H1 (cell line): ENCODE measurements at regions of chr13 and their contacts with region 1.

Region 1: DNA sequence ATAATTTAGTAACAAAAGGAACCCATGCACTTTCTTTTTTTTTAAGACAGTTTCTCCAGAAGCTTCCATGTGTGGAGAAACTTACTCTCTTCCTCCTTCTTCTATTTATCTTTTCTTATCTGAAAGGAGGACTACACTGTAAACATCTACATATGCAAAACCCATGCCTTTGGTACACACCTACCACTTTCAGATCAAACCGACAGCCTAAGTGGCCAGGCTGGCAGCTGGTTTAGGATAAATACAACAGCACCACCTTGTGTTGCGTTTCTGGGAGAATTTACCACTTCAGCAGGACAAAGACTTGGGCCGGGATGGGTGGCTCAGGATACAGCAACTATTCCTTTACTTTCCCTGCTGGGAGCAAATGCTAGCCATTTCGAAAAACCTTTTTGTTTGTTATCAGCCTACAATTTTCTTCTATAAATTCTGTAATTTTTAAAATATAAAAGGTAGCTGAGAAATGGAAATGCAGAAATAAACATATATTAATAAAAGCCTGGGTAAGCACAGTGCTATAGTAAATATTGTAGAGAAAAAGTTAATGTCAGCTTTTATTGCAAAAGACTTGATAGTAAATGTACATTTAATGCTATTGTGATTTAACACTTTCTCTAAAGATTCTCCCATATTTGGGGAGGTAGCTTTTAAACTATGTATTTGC is 94.0 kb upstream of the RFC3 start:
- DNase-seq: peak; percentile 39 to 63
- H3K4me3 ChIP-seq: no peak overlapping the region
- H3K27ac ChIP-seq: no peak overlapping the region
- H3K4me1 ChIP-seq: no peaks in the 10 kb centered on the region
- H3K27me3 ChIP-seq: no peaks in the 10 kb centered on the region
- CTCF ChIP-seq: peak; percentile 43 to 83 (median 81)
- EP300 ChIP-seq: no peak
- POLR2A ChIP-seq: no peak
- RAD21 ChIP-seq: peak; percentile 97

Region 2: DNA sequence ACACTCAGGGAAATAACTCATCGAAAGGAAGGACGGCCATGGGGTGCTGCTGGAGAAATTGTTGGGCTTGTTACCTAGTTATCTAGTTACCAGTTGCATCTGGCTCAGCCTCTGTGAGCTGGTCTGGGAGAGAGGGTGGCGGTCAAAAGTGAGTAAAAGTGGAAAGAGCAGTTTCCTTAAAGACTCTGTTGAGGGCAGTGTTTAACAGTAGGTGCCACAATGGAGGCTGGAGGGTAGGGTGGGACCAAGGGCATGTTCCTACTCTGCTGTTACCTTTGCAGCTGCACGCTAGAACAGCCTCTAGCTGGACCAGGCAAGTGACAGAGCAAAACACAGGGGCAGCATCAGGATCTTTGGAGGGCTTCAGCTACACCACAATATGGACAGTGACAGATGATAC is 209.5 kb before region 1 on chr13:
- CTCF ChIA-PET with region 1: interaction called, 18 read pairs
- POLR2A ChIA-PET with region 1: no interaction called
- DNase-seq: no peak
- H3K4me3 ChIP-seq: no peak overlapping the region
- H3K27ac ChIP-seq: no peak overlapping the region
- H3K4me1 ChIP-seq: peaks cover 1 to 12% (median 6%) of the 10 kb centered on the region in 4 experiments; a peak in 4 of 7 replicates
- H3K27me3 ChIP-seq: no peaks in the 10 kb centered on the region
- CTCF ChIP-seq: peak in 2 of 3 experiments; percentile 50 to 53; a peak in 3 of 4 replicates
- EP300 ChIP-seq: no peak
- POLR2A ChIP-seq: no peak
- RAD21 ChIP-seq: peak; percentile 72 to 77

Region 3: DNA sequence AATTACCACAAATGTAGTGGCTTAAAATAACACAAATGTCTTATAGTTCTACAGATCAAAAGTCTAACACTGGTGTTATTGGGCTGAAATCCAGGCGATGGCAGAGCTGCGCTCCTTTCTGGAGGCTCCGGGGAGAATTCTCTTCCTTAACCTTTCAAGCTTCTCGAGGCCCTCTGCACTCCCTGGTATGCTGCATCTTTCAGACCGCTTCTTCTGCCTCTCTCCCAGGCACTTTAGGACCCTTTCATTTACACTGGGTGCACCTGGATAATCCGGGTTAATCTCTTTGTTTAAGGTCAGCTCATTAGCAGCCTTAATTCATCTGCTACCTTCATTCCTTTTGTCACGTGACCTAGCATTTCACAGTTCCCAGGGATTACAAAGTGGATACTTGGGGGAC is 117.2 kb before region 1 on chr13:
- CTCF ChIA-PET with region 1: interaction called, 17 read pairs
- POLR2A ChIA-PET with region 1: no interaction called
- DNase-seq: peak in 1 of 2 experiments; percentile 23
- H3K4me3 ChIP-seq: no peak overlapping the region
- H3K27ac ChIP-seq: no peak overlapping the region
- H3K4me1 ChIP-seq: peaks cover 0 to 4% (median under 1%) of the 10 kb centered on the region in 4 experiments; a peak in 1 of 7 replicates
- H3K27me3 ChIP-seq: no peaks in the 10 kb centered on the region
- CTCF ChIP-seq: peak in 2 of 3 experiments; percentile 31 to 34; a peak in 3 of 4 replicates
- EP300 ChIP-seq: no peak
- POLR2A ChIP-seq: no peak
- RAD21 ChIP-seq: peak; percentile 61 to 70